Activated CD4-positive, alpha-beta T cell treated with anti-CD3 and anti-CD28 coated beads, Interleukin-2, amount 10 ng/mL, durations not matched to agents 24 days and 14 days (primary cell): ENCODE measurements at regions of chr2 and their contacts with region 1.

Region 1: DNA sequence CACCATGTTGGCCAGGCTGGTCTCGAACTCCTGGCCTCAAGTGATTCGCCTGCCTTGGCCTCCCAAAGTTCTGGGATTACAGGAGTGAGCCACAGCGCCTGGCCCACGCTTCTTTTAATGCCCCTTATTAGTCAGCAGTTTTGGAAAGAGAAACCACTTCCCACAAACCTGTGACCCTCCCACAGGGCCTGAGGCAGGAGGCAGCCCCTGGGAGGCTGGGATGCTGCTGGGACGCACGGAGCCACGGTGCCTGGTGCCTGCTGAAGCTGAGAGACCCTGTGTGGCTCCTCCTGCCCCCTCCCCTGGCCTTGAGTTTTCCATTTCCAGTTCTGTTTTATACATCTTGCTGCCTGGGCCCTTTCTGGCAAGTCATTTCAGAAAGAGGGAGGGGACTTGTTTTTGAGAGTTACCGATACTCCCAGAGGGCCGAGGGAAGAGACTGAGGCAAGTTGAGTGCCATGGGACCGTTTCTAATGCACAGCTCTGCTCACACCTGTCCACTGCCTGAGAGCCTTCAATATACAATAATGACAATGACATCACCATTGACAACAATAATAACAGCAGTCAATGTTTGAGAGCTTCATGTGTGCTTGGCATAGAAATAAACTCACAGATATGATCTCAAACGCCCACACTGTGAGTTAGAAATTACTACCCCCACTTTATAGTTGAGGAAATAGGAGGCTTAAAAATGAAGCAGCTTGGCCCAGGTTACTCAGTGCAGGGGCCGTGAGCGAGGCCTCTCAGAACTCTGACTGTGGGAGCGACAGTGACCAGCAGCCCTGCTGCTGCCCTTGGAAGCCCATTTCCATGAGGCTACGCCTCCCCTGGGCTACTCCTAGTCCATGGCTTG is 78.1 kb upstream of the YWHAQ start:
- DNase-seq: no peak
- H3K4me3 Mint-ChIP-seq: peak overlapping the region; percentile 17
- H3K27ac Mint-ChIP-seq: peak overlapping the region; percentile 91
- H3K4me1 Mint-ChIP-seq: peaks cover 51% of the 10 kb centered on the region
- H3K27me3 Mint-ChIP-seq: no peaks in the 10 kb centered on the region

Region 2: GRCh38 chr2:9697909-9698308 is 11.0 kb before region 1 on chr2:
- intact Hi-C with region 1: loop called (anchors 1 kb)
- DNase-seq: peak; percentile 67
- H3K4me3 Mint-ChIP-seq: peak overlapping the region; percentile 27
- H3K27ac Mint-ChIP-seq: peak overlapping the region; percentile 27
- H3K4me1 Mint-ChIP-seq: peaks cover 31% of the 10 kb centered on the region
- H3K27me3 Mint-ChIP-seq: peaks cover 2% of the 10 kb centered on the region

Region 3: DNA sequence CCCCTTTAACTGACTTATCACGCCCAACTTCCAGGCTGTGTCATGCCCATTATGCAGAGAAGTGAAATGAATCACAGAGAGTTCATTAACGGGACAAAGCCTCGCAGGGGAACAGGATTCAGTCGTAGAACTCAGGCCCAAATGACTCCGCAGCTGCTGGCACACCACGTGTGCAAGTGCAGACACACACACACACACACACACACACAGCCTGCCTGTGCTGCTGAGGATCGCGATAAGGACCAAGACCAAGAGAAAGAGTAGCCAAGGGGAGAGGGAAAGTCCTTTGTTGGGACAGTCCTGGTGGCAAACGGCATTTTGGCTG is 44.3 kb after region 1 on chr2:
- intact Hi-C with region 1: loop called (anchors 1 kb)
- DNase-seq: peak; percentile 83
- H3K4me3 Mint-ChIP-seq: peak overlapping the region; percentile 56
- H3K27ac Mint-ChIP-seq: peak overlapping the region; percentile 88
- H3K4me1 Mint-ChIP-seq: peaks cover 59% of the 10 kb centered on the region
- H3K27me3 Mint-ChIP-seq: peaks cover 32% of the 10 kb centered on the region

Region 4: DNA sequence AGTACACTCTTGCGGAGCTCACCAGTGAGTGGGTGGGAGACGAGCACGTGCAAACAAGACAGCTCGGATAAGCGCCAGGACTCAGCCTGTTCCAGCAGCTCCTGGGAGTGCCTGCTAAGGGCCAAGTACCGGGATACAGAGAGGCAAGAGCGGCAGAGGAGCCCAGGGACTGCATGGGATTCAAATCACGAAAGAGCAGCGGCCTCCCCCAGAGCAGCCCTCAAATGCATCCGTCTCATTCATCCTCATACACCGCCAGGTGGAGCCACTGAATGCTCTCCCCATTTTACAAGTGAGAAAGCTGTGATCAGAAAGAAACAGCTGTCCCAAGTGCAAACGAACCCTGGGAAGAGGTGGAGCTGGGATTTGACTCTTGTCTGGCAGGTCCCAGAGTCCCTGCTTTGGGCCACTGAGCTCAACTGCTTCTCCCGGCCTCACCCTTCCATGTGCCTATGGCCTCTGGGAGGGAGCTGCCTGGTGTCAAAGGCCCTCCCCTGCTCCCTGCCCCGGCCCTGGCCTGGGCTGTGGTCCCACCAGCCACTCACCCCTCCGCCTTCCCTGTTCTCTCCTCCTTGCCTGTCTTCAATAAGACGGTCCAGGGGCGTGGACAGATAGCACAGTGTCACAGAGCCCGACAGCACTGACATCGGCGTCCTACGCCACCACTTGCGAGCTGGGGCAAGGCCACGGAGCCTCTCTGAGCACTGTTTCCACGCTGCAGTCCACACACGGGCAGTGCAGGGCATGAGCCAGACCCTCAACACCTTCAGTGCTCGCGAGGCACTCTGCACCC is 61.6 kb after region 1 on chr2:
- intact Hi-C with region 1: no loop called
- DNase-seq: peak; percentile 86
- H3K4me3 Mint-ChIP-seq: no peak overlapping the region
- H3K27ac Mint-ChIP-seq: no peak overlapping the region
- H3K4me1 Mint-ChIP-seq: peaks cover 20% of the 10 kb centered on the region
- H3K27me3 Mint-ChIP-seq: peaks cover 2% of the 10 kb centered on the region

Region 5: GRCh38 chr2:10109311-10109710 is 400.4 kb after region 1 on chr2:
- intact Hi-C with region 1: no loop called
- DNase-seq: no peak
- H3K4me3 Mint-ChIP-seq: no peak overlapping the region
- H3K27ac Mint-ChIP-seq: no peak overlapping the region
- H3K4me1 Mint-ChIP-seq: no peaks in the 10 kb centered on the region
- H3K27me3 Mint-ChIP-seq: no peaks in the 10 kb centered on the region